ENCODE measurements at regions of chr10 and their contacts with region 1.

Region 1: DNA sequence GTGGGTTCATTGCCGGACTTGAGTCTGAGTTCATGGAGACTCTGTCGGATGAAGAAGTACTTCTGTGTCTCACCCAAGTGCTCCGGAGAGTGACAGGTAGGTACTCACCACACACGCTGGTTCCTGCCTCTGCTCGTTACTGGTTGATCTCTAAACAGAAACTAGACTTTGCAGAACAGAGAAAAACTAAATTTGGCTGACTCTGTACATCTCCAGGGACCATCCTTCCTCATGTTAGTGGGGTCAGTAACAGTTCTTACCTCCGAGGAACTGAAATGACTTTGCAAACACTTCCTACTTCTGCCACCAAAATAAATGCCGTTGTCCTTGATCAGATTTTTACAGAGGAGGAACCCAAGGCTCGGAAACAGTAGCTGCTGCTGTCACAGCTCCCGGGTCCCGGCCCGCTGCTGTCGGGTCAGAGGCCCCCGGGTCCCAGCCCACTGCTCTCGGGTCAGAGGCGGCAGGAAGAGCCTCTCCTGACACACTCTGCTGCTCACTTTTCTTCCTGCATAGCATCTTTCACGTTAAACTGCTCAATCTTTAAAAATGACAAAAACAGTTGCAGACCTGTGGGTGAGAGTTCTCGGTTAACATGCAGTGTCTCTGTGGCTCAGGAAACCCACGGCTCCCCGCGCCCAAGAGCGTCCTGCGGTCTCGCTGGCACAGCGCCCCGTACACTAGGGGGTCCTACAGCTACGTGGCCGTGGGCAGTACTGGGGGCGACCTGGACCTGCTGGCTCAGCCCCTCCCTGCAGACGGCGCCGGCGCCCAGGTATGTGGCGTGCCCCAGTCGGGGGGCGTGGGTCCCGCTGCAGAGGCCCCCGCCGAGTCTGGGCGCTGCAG is 4.8 kb upstream of the MTG1 start:
- DNase-seq: peak in 5 of 10 donors; percentile 28 to 59 (median 55)
- ATAC-seq: peak; percentile 54 to 63
- H3K4me3 Mint-ChIP-seq: peak overlapping the region; percentile 73 to 94 (median 87)
- H3K27ac Mint-ChIP-seq: peak overlapping the region; percentile 93 to 99 (median 96)
- H3K4me1 Mint-ChIP-seq: peaks cover 16 to 53% (median 34%) of the 10 kb centered on the region in 4 donors
- H3K27me3 Mint-ChIP-seq: no peaks in the 10 kb centered on the region

Region 2: DNA sequence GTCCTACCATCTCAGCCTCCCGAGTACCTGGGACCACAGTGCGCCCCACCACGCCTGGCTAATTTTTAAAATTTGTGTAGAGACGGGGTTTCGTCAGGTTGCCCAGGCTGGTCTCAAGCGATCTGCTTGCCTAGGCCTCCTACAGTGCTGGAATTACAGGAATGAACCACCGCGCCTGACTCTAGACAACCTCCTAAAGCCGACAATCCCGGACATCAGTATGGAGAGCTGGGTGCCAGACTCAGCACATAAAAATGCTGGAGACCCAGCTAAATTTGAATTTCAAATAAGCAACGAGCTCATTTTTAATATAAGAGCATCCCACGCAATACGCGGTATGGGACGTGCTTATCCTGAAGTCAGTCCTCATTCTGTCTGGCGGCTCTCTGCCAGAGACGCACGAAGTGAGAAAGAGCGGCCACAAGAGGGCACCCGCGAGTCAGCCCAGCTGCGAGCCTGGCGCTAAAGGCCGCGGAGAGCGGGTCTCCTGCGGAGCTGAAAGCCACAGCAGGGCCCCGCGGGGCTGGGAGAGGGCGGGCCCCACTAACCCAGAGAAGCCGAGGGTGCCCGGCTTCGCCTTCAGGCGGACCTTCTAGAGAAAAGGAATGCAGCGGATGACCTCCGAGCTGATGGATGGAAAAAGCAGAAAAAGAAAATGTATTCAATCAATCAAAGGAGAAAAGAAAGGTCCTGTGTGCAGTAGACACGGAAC is 59.5 kb before region 1 on chr10:
- POLR2A ChIA-PET with region 1: interaction called, 14 read pairs
- DNase-seq: peak; percentile 72 to 91 (median 84)
- ATAC-seq: peak; percentile 84 to 85
- H3K4me3 Mint-ChIP-seq: peak overlapping the region in 8 of 10 donors; percentile 12 to 80 (median 50)
- H3K27ac Mint-ChIP-seq: peak overlapping the region in 5 of 10 donors; percentile 29 to 85 (median 51)
- H3K4me1 Mint-ChIP-seq: peaks cover 10 to 23% (median 15%) of the 10 kb centered on the region in 4 donors
- H3K27me3 Mint-ChIP-seq: peaks cover 6 to 42% (median 31%) of the 10 kb centered on the region in 5 donors

Region 3: DNA sequence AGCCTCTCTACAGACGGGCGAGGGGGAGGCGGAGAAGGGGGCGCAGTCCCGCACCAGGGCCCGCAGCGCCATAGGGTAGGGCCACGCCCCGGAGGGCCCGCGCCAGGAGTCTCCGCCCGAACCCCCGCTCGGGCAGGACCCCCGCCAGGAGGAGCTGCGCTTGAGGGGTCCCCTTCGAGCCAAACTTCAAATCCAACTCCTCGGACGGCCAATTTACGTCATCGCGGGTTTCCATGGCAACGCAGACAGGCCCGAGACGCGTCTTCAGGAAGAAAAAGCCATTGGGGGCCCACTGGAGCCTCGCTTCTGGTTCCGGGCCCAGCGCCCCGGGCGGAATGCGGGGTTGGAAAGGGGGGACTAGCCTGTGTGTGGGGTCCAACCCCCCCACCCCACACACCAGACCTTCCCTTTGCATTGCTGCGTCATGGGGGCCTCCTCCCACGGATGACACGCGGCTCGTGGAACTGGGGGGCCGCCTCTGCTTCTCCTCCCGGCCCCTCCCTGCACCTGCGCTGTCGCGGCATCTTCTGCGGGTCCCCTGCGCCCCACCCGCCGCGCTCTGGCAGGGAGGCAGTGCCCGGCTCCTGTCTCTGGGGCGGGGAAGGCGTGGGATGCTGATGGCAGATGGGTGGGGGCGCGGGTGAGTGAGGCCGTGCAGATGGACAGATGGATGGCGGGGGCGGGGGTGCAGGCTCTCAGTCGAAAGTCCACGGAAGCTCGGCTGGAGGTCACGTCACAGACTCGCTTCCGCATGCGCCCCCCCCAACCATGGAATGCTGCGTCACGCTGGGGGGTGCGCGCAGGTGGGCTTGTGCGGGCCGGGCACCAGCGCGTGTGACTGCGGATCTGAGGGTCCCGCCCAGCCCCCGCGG is 53.7 kb before region 1 on chr10:
- POLR2A ChIA-PET with region 1: interaction called, 11 read pairs
- DNase-seq: peak; percentile 73 to 97 (median 88)
- ATAC-seq: peak; percentile 57 to 59
- H3K4me3 Mint-ChIP-seq: peak overlapping the region in 9 of 10 donors; percentile 67 to 94 (median 77)
- H3K27ac Mint-ChIP-seq: peak overlapping the region in 9 of 10 donors; percentile 56 to 97 (median 93)
- H3K4me1 Mint-ChIP-seq: peaks cover 2 to 7% (median 7%) of the 10 kb centered on the region in 4 donors
- H3K27me3 Mint-ChIP-seq: peaks cover 0 to 13% (median 0%) of the 10 kb centered on the region in 5 donors

Region 4: GRCh38 chr10:133373104-133373624 is 16.0 kb before region 1 on chr10 and contains the start of gene ECHS1:
- POLR2A ChIA-PET with region 1: interaction called, 58 read pairs
- DNase-seq: peak; percentile 86 to 96 (median 92)
- ATAC-seq: peak; percentile 97 to 99
- H3K4me3 Mint-ChIP-seq: peak within 1 kb of the TSS; percentile 64 to 89 (median 80)
- H3K27ac Mint-ChIP-seq: peak within 1 kb of the TSS in 9 of 10 donors; percentile 48 to 90 (median 69)
- H3K4me1 Mint-ChIP-seq: peaks cover 7 to 22% (median 17%) of the 10 kb centered on the region in 4 donors
- H3K27me3 Mint-ChIP-seq: no peaks in the 10 kb centered on the region
- polyA plus RNA-seq, gene ECHS1: 103 to 110 (median 104) TPM

Region 5: GRCh38 chr10:133378251-133379096 is 10.7 kb before region 1 on chr10:
- POLR2A ChIA-PET with region 1: interaction called, 58 read pairs
- DNase-seq: peak; percentile 37 to 72 (median 54)
- ATAC-seq: peak; percentile 57 to 69
- H3K4me3 Mint-ChIP-seq: peak overlapping the region; percentile 71 to 92 (median 85)
- H3K27ac Mint-ChIP-seq: peak overlapping the region in 7 of 10 donors; percentile 31 to 90 (median 73)
- H3K4me1 Mint-ChIP-seq: peaks cover 2 to 38% (median 13%) of the 10 kb centered on the region in 4 donors
- H3K27me3 Mint-ChIP-seq: no peaks in the 10 kb centered on the region

Region 6: GRCh38 chr10:133400624-133401424 is 11.6 kb after region 1 on chr10:
- POLR2A ChIA-PET with region 1: no interaction called
- DNase-seq: no peak
- ATAC-seq: no peak
- H3K4me3 Mint-ChIP-seq: peak overlapping the region in 1 of 10 donors; percentile 54
- H3K27ac Mint-ChIP-seq: peak overlapping the region in 3 of 10 donors; percentile 33 to 59 (median 36)
- H3K4me1 Mint-ChIP-seq: peaks cover 28 to 44% (median 33%) of the 10 kb centered on the region in 4 donors
- H3K27me3 Mint-ChIP-seq: no peaks in the 10 kb centered on the region

Region 7: DNA sequence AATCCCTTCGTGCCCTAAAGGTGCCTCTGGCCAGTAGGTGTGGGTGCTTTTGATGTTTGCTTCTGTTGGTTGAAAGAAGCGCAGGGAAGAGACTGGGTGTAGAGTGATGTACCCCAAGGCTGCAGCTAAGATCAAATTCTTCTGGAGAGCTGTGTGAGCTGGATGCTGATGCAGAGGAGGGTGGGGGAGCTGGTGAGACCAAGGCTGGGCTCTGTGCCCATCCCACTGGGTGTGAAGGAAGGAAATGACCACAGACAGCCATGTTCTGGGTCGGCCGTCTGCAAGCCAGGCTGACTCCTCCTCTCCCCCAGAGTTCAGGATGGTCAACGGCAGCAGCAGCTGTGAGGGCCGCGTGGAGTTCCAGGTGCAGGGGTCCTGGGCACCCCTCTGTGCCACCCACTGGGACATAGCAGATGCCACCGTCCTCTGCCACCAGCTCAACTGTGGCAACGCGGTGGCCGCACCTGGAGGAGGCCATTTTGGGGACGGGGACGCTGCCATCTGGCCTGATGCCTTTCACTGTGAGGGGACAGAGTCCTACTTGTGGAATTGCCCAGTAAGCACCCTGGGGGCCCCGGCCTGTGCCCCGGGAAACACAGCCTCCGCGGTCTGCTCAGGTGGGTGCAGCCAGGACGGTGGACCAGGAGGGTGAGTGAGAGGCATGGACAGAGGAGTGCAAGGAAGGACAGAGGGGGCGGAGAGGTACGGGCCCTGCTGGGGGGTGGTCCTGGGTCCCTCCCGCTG is 69.7 kb after region 1 on chr10:
- POLR2A ChIA-PET with region 1: no interaction called
- DNase-seq: no peak
- ATAC-seq: no peak
- H3K4me3 Mint-ChIP-seq: no peak overlapping the region
- H3K27ac Mint-ChIP-seq: no peak overlapping the region
- H3K4me1 Mint-ChIP-seq: no peaks in the 10 kb centered on the region
- H3K27me3 Mint-ChIP-seq: no peaks in the 10 kb centered on the region